MCF 10A (cell line): ENCODE measurements at regions of chr1 and their contacts with region 1.

Region 1: DNA sequence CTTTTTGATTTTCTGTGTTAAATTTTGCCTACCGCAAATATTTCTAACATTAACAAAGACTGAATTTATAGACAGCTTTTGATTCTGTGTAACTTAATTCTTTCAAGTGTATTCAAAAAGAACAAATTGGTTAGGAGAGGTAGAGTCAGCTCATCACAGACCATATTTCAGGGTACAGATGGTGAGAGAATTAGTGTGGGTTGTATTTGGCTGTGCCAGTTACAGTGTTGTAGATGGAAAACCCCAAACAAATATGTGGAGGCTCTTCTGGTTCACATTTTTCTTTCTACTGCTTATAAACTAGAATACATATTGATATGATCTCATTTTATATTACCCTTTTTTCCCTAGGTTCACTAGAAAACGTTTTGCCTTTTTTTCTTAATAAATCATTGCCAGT is 11.1 kb downstream of the RCAN3 start:
- DNase-seq: no peak
- H3K4me3 Mint-ChIP-seq: no peak overlapping the region
- H3K27ac Mint-ChIP-seq: no peak overlapping the region
- H3K4me1 Mint-ChIP-seq: peaks cover 15% of the 10 kb centered on the region
- H3K27me3 Mint-ChIP-seq: no peaks in the 10 kb centered on the region
- CTCF ChIP-seq: no peak

Region 2: GRCh38 chr1:24526940-24527542 is 13.3 kb after region 1 on chr1:
- CTCF ChIA-PET with region 1: interaction called, 3 read pairs
- POLR2A ChIA-PET with region 1: interaction called, 14 read pairs
- intact Hi-C with region 1: no loop called
- DNase-seq: peak; percentile 38
- H3K4me3 Mint-ChIP-seq: no peak overlapping the region
- H3K27ac Mint-ChIP-seq: no peak overlapping the region
- H3K4me1 Mint-ChIP-seq: no peaks in the 10 kb centered on the region
- H3K27me3 Mint-ChIP-seq: no peaks in the 10 kb centered on the region
- CTCF ChIP-seq: peak; percentile 49